CD4-positive, alpha-beta memory T cell (primary cell): ENCODE measurements at regions of chr6 and their contacts with region 1.

Region 1: GRCh38 chr6:42038811-42039408 is 11.4 kb upstream of the TAF8 start:
- DNase-seq: no peak
- H3K4me3 ChIP-seq: peak overlapping the region; percentile 9 to 52
- H3K4me3 Mint-ChIP-seq: peak overlapping the region; percentile 74 to 90 (median 87)
- H3K27ac ChIP-seq: peak overlapping the region; percentile 48
- H3K27ac Mint-ChIP-seq: peak overlapping the region; percentile 81 to 98 (median 91)
- H3K4me1 ChIP-seq: peaks cover 92% of the 10 kb centered on the region
- H3K4me1 Mint-ChIP-seq: peaks cover 39 to 81% (median 64%) of the 10 kb centered on the region in 4 donors
- H3K27me3 ChIP-seq: no peaks in the 10 kb centered on the region
- H3K27me3 Mint-ChIP-seq: no peaks in the 10 kb centered on the region

Region 2: DNA sequence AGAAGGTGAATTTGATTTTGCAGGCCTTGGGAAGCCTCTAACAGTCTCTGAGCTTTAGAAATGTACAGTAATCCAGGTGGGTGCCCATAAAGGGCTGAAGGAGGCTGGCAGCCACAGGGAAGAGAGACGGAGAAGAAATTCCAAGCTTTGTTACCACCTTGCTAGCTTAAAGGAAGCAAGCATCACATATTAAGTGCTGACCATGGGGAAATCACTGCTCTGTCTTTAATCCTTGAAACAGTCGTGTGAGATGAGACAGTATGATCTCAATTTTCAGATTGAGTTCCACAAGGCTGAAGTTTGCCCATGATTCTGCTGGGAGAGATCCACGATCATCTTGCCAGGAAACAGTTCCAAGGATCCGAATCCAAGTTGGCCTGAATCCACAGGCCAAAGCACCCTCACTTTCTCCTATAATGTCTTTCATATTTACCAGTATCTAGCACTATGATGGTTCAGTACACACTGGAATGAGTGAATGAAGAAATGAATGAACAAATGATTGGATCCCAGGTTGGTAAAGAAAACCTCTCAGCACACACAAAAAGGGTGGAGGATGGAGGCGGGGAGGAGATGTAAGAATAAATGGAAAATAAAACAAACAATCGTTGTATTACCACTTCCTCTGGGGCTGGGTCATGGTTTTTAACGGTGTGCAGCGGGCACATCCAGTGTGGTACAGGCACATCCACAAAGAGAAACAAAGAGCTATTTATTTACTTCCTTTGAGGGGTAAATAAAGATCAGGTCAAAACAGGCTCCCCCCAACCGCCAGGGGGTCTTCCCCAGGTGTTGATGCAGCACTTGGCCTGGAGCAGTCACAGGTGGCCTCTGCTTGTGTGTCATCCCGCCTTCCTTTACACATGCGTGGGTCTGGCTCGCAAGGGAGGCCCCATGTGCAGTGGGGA is 16.8 kb before region 1 on chr6:
- CTCF ChIA-PET with region 1: interaction called, 12 read pairs
- POLR2A ChIA-PET with region 1: interaction called, 15 read pairs
- intact Hi-C with region 1: loop called (anchors 1 kb)
- DNase-seq: peak; percentile 73 to 93 (median 81)
- H3K4me3 ChIP-seq: peak overlapping the region in 1 of 2 donors; percentile 47
- H3K4me3 Mint-ChIP-seq: peak overlapping the region; percentile 75 to 92 (median 85)
- H3K27ac ChIP-seq: peak overlapping the region; percentile 65
- H3K27ac Mint-ChIP-seq: peak overlapping the region; percentile 91 to 98 (median 95)
- H3K4me1 ChIP-seq: peaks cover 83% of the 10 kb centered on the region
- H3K4me1 Mint-ChIP-seq: peaks cover 60 to 80% (median 66%) of the 10 kb centered on the region in 4 donors
- H3K27me3 ChIP-seq: no peaks in the 10 kb centered on the region
- H3K27me3 Mint-ChIP-seq: no peaks in the 10 kb centered on the region

Region 3: GRCh38 chr6:42028234-42029061 is 10.5 kb before region 1 on chr6:
- CTCF ChIA-PET with region 1: interaction called, 36 read pairs
- POLR2A ChIA-PET with region 1: interaction called, 14 read pairs
- intact Hi-C with region 1: loop called (anchors 1 kb)
- DNase-seq: no peak
- H3K4me3 ChIP-seq: no peak overlapping the region
- H3K4me3 Mint-ChIP-seq: peak overlapping the region in 7 of 8 donors; percentile 64 to 81 (median 76)
- H3K27ac ChIP-seq: peak overlapping the region; percentile 62
- H3K27ac Mint-ChIP-seq: peak overlapping the region; percentile 92 to 95 (median 93)
- H3K4me1 ChIP-seq: peaks cover 98% of the 10 kb centered on the region
- H3K4me1 Mint-ChIP-seq: peaks cover 66 to 97% (median 80%) of the 10 kb centered on the region in 4 donors
- H3K27me3 ChIP-seq: no peaks in the 10 kb centered on the region
- H3K27me3 Mint-ChIP-seq: no peaks in the 10 kb centered on the region

Region 4: DNA sequence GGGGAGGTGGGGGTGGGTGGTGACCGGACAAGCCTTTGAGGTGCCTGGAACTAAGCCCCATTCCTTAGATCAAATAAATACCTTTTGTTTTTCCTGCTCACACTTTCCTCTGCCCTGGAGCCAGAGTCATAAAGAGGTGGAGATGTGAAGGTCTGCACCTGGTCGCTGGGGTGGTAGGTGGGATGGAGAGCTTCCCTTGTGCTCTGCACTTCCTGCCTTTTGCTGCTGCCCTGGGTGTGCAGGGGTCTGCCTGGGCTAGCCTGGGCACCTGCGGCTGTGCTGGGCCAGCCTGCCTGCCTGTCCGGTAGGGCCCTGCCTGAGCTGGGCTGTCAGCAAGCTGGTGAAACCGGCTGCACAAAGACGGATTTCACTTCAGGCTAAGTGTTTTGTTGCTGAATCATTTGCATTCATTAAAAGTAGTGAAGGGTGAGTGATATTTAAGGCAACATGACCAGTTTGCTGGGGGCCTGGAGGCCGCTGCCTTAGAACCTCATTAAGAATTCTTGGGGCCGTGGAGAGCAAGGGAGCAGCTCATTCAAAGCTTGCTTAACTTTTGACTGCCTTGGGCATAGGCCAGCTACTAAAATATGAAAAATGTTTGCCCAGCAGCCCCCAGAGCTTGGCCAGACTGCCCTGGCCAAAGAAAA is 1057.7 kb after region 1 on chr6:
- CTCF ChIA-PET with region 1: no interaction called
- POLR2A ChIA-PET with region 1: no interaction called
- intact Hi-C with region 1: no loop called
- DNase-seq: no peak
- H3K4me3 ChIP-seq: no peak overlapping the region
- H3K4me3 Mint-ChIP-seq: no peak overlapping the region
- H3K27ac ChIP-seq: no peak overlapping the region
- H3K27ac Mint-ChIP-seq: no peak overlapping the region
- H3K4me1 ChIP-seq: peaks cover 15% of the 10 kb centered on the region
- H3K4me1 Mint-ChIP-seq: peaks cover 12 to 22% (median 15%) of the 10 kb centered on the region in 4 donors
- H3K27me3 ChIP-seq: no peaks in the 10 kb centered on the region
- H3K27me3 Mint-ChIP-seq: no peaks in the 10 kb centered on the region